ENCODE measurements at regions of chr7 and their contacts with region 1.

Region 1: DNA sequence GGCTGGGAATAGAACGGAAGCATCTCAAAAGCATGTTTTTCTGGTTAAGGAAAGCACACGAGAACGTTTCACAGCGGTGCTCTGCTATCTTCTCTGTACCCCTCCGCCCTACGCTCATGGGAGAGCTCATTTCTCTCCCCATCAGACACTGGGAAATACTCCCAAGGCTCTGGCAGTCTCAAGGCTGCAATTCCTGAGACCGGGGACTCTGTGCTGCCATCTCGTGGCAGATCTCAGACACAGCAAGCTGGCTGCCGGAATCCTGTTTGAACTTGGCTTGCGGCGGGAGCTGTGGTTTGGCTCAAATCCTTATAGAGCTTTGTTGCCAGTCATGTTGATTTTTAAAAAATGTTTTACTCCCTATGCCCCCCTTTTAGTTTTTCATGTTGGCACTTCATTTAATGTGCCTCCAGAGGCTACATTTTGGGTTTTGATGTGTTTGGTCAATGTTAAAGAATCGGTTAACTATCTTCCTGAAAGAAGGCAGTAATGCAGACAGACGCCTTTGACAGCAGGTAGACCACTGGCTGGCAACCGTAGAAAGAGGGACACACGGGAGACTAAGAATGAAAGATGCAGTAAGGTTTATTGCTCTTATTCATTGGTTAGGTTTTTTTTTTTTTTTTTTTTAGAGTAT is 27.6 kb downstream of the BMPER start:
- DNase-seq: peak; percentile 86

Region 2: GRCh38 chr7:33243319-33243881 is 689.5 kb before region 1 on chr7:
- intact Hi-C with region 1: loop called (anchors 2 kb)
- DNase-seq: no peak

Region 3: GRCh38 chr7:33562996-33563395 is 370.0 kb before region 1 on chr7:
- intact Hi-C with region 1: no loop called
- DNase-seq: no peak

Region 4: DNA sequence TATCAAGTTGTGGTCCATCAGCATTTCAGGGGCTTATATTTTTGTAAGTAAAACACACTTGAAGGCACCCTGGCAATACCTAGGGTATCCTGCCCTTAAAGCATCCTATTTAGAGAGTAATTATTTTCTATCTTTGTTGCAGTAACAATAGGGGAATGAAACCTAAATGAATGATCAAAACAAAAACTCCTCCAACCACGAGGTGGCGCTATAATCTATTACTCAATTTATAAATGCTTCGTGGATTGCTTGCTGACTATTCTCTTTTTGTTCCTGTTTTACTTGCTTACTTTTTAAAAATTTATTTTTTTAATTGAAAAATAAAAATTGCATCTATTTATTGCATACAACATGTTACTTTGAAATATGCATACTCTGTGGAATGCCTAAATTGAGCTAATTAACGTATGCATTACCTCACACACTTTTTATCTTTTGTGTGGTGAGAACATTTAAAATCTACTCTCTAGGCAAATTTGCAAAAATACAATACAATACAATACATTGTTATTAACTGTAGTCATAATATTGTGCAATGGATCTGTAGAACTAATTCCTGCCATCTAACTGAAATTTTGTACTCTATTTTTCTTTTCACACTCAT is 175.3 kb before region 1 on chr7:
- intact Hi-C with region 1: loop called (anchors 10 kb)
- DNase-seq: no peak

Region 5: DNA sequence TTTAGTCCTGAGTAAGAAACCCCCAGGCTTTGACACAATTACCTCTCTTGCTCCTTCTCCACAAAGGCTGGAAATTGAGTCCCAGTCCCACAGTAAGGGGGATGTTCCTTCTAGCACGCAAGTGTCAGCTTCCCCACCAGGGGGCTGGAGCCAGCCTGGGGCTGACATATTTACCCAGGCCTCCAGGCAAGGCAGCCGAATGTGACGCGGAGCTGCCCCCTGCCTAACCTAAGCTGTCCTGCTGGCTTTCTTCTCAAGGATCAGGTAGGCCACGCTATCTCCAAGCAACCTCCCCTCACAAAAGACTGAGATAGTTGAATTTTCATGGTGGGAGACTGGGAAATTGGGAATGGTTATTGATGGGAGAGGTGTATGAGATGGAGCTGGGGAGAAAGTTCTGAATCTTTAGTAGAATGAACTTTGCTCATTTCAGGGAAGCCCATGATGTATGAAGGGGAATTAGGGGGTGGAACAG is 46.8 kb before region 1 on chr7:
- intact Hi-C with region 1: no loop called
- DNase-seq: no peak

Measured in cardiac septum (tissue), 1 donor.